ENCODE measurements at regions of chr6 and their contacts with region 1.

Region 1: DNA sequence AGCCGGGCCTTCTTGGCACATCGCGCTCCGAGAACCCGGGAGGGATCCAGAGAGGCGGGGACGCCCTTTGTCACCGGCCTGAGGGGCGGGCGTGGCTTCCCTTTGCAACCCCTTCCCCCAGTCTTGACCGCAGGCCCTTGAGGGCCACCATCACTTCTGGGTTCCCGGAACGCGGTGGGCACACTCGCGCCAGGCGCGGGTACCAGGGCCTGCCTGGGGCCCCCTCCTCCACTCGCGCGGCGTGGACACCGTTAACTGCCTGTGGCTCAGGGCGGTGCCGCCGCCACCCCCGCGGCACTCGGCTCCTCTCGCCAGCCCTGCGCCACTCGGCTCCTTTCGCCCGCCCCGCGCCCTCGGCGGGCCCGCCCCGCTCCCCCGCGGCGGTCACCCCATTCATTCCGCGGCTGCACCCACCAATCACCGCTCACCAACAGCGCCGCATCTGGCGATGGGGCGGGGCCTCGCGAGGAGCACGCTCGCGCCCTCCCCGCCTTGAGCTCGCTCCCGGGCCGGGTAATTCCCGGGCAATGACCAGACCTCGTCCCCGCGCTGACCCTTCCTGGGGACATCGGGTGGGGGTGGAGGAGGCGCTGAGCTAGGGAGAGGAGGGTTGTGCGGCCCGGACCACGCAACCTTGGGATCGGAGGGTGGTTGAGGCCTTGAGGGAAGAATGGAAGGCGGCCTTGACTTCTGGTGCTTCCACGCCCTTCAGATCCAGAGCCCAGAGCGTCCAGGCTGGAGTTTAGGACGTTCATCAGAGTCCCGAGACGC is 10.5 kb upstream of the ELOVL5 start:
- DNase-seq: peak; percentile 91
- ATAC-seq: peak; percentile 92
- H3K4me3 Mint-ChIP-seq: peak overlapping the region; percentile 92
- H3K27ac Mint-ChIP-seq: peak overlapping the region; percentile 99
- H3K4me1 Mint-ChIP-seq: peaks cover 59% of the 10 kb centered on the region
- H3K27me3 Mint-ChIP-seq: no peaks in the 10 kb centered on the region
- CTCF ChIP-seq: no peak

Region 2: DNA sequence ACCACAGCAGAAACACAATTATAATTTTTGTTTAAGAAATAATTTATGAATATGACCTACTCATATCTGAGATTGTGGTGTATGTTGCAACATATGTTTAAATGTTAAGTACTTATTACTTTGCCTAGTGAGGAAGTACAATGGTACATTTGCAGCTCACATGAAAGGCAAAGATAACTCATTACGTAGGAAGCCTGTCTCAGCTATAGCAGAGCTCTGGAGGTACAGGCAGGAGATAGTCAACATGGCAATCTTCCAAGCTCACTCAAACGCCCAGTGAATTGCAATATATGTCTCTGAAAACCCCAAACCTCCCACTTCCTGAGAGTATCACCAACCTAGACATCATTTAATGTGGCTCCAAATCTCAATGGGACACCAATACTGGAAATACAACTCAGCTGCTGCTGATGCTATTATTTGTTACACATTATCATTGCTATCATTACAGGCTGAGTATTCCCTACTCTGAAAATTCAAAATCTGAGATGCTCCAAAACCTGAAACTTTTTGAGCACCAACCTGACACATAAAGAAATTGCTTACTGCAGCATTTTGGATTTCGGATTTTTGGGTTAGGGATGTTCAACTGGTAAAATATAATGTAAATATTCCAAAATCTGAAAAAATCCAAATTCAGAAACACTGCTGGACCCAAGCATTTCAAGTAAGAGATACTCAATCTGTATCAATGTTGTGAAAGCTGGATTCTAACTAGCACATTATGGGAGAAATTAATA is 339.1 kb before region 1 on chr6:
- CTCF ChIA-PET with region 1: no interaction called
- POLR2A ChIA-PET with region 1: no interaction called
- intact Hi-C with region 1: no loop called
- DNase-seq: no peak
- ATAC-seq: no peak
- H3K4me3 Mint-ChIP-seq: no peak overlapping the region
- H3K27ac Mint-ChIP-seq: no peak overlapping the region
- H3K4me1 Mint-ChIP-seq: no peaks in the 10 kb centered on the region
- H3K27me3 Mint-ChIP-seq: no peaks in the 10 kb centered on the region
- CTCF ChIP-seq: no peak

Region 3: DNA sequence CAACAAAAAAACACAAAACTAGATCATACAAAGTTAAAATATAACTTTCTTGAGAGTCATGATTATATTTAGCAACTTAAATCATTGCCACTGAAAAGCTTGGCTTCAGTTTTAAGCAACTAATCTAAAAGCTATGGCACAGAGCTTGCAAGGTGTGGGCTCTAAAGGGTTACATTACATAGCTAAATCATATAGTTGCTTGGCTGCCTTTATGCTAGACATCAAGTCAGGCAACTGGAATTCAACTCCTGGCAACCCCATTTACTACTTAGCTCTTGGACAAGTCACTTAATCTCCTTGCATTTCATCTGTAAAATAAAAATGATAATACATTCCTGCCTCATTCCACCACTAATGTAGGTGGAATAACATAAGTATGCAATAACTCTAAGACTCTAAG is 169.7 kb before region 1 on chr6:
- CTCF ChIA-PET with region 1: no interaction called
- POLR2A ChIA-PET with region 1: interaction called, 12 read pairs
- intact Hi-C with region 1: no loop called
- DNase-seq: no peak
- ATAC-seq: no peak
- H3K4me3 Mint-ChIP-seq: no peak overlapping the region
- H3K27ac Mint-ChIP-seq: no peak overlapping the region
- H3K4me1 Mint-ChIP-seq: peaks cover 48% of the 10 kb centered on the region
- H3K27me3 Mint-ChIP-seq: no peaks in the 10 kb centered on the region
- CTCF ChIP-seq: no peak

Region 4: GRCh38 chr6:53294095-53294494 is 65.2 kb before region 1 on chr6:
- CTCF ChIA-PET with region 1: interaction called, 6 read pairs
- POLR2A ChIA-PET with region 1: interaction called, 11 read pairs
- intact Hi-C with region 1: no loop called
- DNase-seq: no peak
- ATAC-seq: peak; percentile 62
- H3K4me3 Mint-ChIP-seq: no peak overlapping the region
- H3K27ac Mint-ChIP-seq: peak overlapping the region; percentile 80
- H3K4me1 Mint-ChIP-seq: peaks cover 89% of the 10 kb centered on the region
- H3K27me3 Mint-ChIP-seq: no peaks in the 10 kb centered on the region
- CTCF ChIP-seq: peak; percentile 26

Region 5: DNA sequence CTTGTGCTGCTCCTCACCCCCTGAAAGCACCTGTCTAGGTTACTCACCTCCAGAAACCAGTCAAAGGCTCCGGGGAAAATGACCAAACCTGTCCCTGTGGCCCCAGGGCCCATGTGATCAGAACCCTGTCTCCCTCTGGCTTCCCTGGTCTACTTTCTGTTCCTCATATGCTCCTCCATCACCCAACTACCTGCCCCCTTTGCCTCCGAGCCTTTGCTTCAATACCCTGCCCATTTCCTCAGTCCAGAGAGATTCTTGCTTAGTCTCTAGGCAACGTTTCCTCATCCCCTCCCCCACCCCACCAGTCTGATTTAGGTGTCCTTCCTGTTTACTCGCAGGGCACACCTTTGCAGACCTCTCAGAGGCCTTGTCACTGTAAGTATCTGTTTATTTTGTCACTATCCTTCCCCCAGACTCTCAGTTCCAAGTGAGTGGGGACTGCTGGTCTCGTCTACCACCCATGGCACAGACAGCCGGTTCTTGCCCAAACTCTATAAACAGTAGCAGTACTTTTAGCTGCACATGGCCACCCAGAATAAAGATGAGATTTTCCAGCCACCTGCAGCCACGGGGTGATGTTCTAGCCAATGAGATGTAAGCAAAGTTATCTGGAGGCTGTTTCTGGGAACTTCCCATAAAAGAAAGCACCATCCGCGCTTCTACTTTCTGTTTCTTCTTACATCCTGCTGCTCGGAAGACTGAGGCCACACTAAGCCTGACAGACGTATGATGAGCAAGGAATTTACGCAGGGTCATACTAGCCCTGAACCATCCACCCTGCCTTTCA is 23.9 kb before region 1 on chr6:
- CTCF ChIA-PET with region 1: interaction called, 4 read pairs
- POLR2A ChIA-PET with region 1: interaction called, 31 read pairs
- intact Hi-C with region 1: loop called (anchors 1 kb)
- DNase-seq: peak; percentile 56
- ATAC-seq: peak; percentile 85
- H3K4me3 Mint-ChIP-seq: peak overlapping the region; percentile 84
- H3K27ac Mint-ChIP-seq: peak overlapping the region; percentile 97
- H3K4me1 Mint-ChIP-seq: peaks cover 93% of the 10 kb centered on the region
- H3K27me3 Mint-ChIP-seq: no peaks in the 10 kb centered on the region
- CTCF ChIP-seq: no peak

Region 6: GRCh38 chr6:53461041-53461656 is 101.9 kb after region 1 on chr6:
- CTCF ChIA-PET with region 1: no interaction called
- POLR2A ChIA-PET with region 1: interaction called, 19 read pairs
- intact Hi-C with region 1: no loop called
- DNase-seq: no peak
- ATAC-seq: peak; percentile 72
- H3K4me3 Mint-ChIP-seq: peak overlapping the region; percentile 72
- H3K27ac Mint-ChIP-seq: peak overlapping the region; percentile 96
- H3K4me1 Mint-ChIP-seq: peaks cover 94% of the 10 kb centered on the region
- H3K27me3 Mint-ChIP-seq: no peaks in the 10 kb centered on the region
- CTCF ChIP-seq: no peak

Measured in activated B cell treated with CpG ODN at 0.5 μM for 24 hours (primary cell).